ENCODE measurements at regions of chr2 and their contacts with region 1.

Region 1: GRCh38 chr2:134912361-134912760 is 6.3 kb upstream of the CCNT2 start:
- DNase-seq: no peak
- ATAC-seq: no peak
- H3K4me3 ChIP-seq: no peak overlapping the region
- H3K27ac ChIP-seq: no peak overlapping the region
- H3K4me1 ChIP-seq: peaks cover 3 to 4% of the 10 kb centered on the region in 2 donors
- H3K27me3 ChIP-seq: no peaks in the 10 kb centered on the region
- CTCF ChIP-seq: no peak
- POLR2A ChIP-seq: no peak

Region 2: GRCh38 chr2:134934641-134935040 is 22.3 kb after region 1 on chr2:
- in situ Hi-C with region 1: no loop called
- intact Hi-C with region 1: loop called (anchors 1 kb)
- DNase-seq: no peak
- ATAC-seq: no peak
- H3K4me3 ChIP-seq: no peak overlapping the region
- H3K27ac ChIP-seq: no peak overlapping the region
- H3K4me1 ChIP-seq: peaks cover 32 to 41% of the 10 kb centered on the region in 2 donors
- H3K27me3 ChIP-seq: no peaks in the 10 kb centered on the region
- CTCF ChIP-seq: no peak
- POLR2A ChIP-seq: no peak